ENCODE measurements at regions of chr5 and their contacts with region 1.

Region 1: GRCh38 chr5:151051066-151051930 is 29.5 kb downstream of the TNIP1 start:
- DNase-seq: peak; percentile 90
- H3K4me3 ChIP-seq: no peak overlapping the region
- H3K27ac ChIP-seq: peak overlapping the region; percentile 11 to 55
- H3K4me1 ChIP-seq: peaks cover 25% of the 10 kb centered on the region
- H3K27me3 ChIP-seq: no peaks in the 10 kb centered on the region
- CTCF ChIP-seq: peak; percentile 73 to 92 (median 86)
- POLR2A ChIP-seq: no peak

Region 2: DNA sequence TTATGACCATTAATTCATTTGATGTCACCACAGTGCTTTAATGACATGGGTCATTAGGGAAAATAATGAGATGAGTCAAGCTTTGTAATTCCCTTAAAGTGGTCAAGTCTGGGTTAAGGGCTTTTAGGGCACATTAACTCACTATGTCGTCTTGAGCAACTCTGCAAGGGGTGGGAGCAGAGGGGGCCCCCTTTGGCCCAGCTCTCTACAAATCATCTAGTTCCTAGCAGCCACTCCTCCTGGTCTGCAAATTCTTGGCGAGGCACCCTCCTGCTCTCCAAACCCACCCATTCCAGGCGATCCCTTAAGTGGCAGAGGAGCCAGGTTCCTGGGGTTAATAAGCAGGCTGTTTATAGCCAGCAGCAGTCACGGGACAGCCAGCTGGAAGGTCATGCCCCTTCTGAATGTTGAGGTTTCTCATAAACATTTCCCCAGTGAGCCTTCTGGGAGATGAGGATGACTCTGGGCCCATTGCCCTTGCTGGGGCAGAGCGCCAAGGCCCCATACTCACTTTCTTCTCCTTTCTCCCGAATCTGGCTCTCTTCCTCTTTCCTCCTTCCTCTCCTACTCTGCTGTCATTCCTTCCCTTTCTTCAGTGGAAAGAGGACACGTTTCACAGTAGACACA is 45.2 kb before region 1 on chr5:
- intact Hi-C with region 1: loop called (anchors 5 kb)
- DNase-seq: peak; percentile 93
- H3K4me3 ChIP-seq: no peak overlapping the region
- H3K27ac ChIP-seq: peak overlapping the region; percentile 68 to 71
- H3K4me1 ChIP-seq: peaks cover 25% of the 10 kb centered on the region
- H3K27me3 ChIP-seq: no peaks in the 10 kb centered on the region
- CTCF ChIP-seq: no peak
- POLR2A ChIP-seq: no peak

Region 3: GRCh38 chr5:151115274-151115905 is 64.1 kb after region 1 on chr5:
- intact Hi-C with region 1: loop called (anchors 2 kb)
- DNase-seq: peak; percentile 85
- H3K4me3 ChIP-seq: no peak overlapping the region
- H3K27ac ChIP-seq: no peak overlapping the region
- H3K4me1 ChIP-seq: no peaks in the 10 kb centered on the region
- H3K27me3 ChIP-seq: no peaks in the 10 kb centered on the region
- CTCF ChIP-seq: peak; percentile 79 to 91 (median 85)
- POLR2A ChIP-seq: no peak

Measured in testis (tissue), 5 donors.